ENCODE measurements at regions of chr14 and their contacts with region 1.

Region 1: GRCh38 chr14:34331728-34332623 is 130.1 kb downstream of the SPTSSA start:
- DNase-seq: peak; percentile 66 to 70
- H3K4me3 ChIP-seq: no peak overlapping the region
- H3K27ac ChIP-seq: peak overlapping the region; percentile 44
- H3K4me1 ChIP-seq: peaks cover 19% of the 10 kb centered on the region
- H3K27me3 ChIP-seq: no peaks in the 10 kb centered on the region
- CTCF ChIP-seq: peak; percentile 84

Region 2: GRCh38 chr14:34262127-34262910 is 69.7 kb before region 1 on chr14:
- CTCF ChIA-PET with region 1: no interaction called
- POLR2A ChIA-PET with region 1: interaction called, 33 read pairs
- intact Hi-C with region 1: no loop called
- DNase-seq: no peak
- H3K4me3 ChIP-seq: no peak overlapping the region
- H3K27ac ChIP-seq: no peak overlapping the region
- H3K4me1 ChIP-seq: 0 out of 2 replicates have a peak, but pooled peaks cover 8% of the 10 kb centered on the region
- H3K27me3 ChIP-seq: no peaks in the 10 kb centered on the region
- CTCF ChIP-seq: no peak

Region 3: DNA sequence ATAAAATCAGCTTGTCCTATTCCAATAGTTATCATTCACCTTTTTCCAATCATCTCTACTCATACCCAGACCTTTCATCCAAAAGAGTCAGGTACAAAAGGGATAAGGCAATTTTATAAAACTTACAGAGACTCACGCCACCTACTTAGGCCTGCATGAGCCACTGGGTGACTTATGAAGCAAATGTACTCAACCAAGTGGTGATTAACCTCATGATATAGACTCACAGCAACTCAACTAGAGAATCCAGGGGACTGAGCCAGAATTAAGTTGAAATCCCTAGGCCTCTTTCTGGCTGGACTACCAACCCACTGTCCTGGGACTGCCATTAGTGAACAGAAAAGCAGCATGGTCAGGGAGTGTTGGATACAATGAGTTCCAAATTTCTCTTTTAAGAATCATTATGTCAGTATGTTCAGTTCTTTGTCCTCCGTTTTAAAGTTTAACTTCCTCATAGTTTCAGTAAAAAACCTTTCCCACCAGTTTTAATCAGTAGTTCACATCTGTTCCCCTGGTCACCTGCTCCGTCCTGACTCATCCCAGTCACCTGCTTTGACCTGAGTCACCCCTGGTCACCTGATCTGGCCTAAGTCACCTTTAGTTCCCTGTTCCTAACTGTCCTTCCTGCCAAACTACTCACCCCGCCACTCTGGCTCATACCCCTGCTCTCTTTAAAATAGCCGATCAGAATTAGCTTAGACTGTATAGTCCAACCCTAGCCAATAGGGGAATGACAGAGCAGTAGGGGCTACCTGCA is 93.3 kb after region 1 on chr14:
- CTCF ChIA-PET with region 1: interaction called, 3 read pairs
- POLR2A ChIA-PET with region 1: no interaction called
- intact Hi-C with region 1: loop called (anchors 1 kb)
- DNase-seq: peak; percentile 67 to 87
- H3K4me3 ChIP-seq: no peak overlapping the region
- H3K27ac ChIP-seq: peak overlapping the region; percentile 93
- H3K4me1 ChIP-seq: peaks cover 22% of the 10 kb centered on the region
- H3K27me3 ChIP-seq: no peaks in the 10 kb centered on the region
- CTCF ChIP-seq: no peak

Region 4: DNA sequence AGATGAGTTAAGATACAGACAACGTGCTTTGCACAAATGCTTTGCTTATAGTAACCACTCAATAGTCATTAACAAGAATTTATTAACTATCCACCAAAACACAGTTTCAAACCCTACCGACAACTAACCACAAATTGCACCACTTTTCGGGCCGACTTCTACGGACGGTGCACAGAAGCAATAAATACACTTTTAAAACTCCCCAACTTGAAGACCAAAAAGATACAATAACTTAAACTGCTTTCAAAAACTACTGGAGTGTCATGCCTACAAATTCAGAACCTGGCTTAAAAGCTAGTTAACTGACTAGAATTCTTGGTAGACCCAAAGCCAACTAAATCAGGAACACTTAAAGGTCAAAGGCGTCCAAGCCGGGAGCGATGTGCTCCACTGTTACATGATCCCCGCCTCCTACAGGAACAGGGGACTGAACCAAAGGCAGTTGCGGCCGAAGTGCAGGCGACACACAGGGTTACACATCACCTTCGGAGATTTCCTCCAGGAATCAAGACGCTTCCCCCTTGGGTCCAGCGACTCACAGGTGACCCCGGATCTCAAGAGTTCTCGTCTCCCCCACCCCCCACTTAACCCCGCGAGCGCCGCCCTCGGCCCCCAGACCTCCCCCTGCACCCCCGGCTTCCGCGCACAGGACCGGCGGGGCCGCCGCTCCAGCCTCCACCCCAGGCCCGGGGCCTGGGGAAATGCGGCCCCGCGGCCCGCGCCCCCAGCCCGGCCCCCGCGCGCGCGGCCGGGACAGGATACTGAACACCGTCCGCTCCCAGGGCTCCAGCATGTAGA is 129.6 kb after region 1 on chr14:
- CTCF ChIA-PET with region 1: interaction called, 4 read pairs
- POLR2A ChIA-PET with region 1: interaction called, 5 read pairs
- intact Hi-C with region 1: loop called (anchors 1 kb)
- DNase-seq: peak; percentile 32 to 49
- H3K4me3 ChIP-seq: peak overlapping the region; percentile 67
- H3K27ac ChIP-seq: no peak overlapping the region
- H3K4me1 ChIP-seq: peaks cover 10% of the 10 kb centered on the region
- H3K27me3 ChIP-seq: no peaks in the 10 kb centered on the region
- CTCF ChIP-seq: no peak

Region 5: DNA sequence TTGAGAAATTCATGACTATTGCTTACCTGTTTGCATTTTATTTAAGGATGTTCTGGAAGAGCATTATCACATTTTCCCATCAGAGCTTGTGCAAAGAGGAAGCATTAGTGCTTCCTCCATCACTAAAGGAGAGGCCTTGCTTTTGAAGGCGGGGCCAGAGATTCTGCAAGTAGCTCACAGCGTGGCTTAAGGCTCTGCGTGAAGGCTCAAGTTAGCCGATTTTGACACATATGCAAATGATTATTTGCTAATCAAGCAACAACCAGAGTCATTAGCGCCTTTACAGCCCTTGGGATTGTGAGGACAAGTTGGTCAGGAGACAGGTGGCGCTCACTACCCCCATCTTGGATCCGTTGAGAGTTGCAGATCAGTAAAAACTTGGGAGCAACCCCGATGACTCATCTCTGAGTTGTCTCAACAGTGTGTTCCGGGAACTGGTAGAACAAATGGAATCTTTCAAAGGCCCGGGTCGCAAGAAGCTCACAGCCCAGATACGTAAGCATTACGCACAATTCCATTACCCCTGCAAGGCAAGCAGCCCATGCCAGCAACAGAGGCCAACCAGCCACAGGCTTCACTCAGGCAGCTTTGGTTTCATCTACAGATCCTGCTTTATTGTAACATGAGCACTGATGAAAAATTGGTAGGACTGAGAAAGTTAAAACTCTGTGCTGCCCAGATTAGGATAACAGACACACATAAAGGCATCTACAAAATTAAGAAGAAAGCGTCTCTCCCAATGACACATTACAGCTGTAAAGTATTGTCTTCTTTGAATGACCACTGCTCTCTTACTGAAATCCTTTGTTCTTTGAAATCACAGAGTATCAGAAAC is 164.9 kb after region 1 on chr14:
- CTCF ChIA-PET with region 1: interaction called, 7 read pairs
- POLR2A ChIA-PET with region 1: no interaction called
- intact Hi-C with region 1: loop called (anchors 1 kb)
- DNase-seq: peak; percentile 70 to 89
- H3K4me3 ChIP-seq: peak overlapping the region; percentile 27; the same call in 1 of the 2 replicates
- H3K27ac ChIP-seq: peak overlapping the region; percentile 85
- H3K4me1 ChIP-seq: peaks cover 33% of the 10 kb centered on the region
- H3K27me3 ChIP-seq: no peaks in the 10 kb centered on the region
- CTCF ChIP-seq: no peak; the same call in 1 of the 2 replicates

Region 6: DNA sequence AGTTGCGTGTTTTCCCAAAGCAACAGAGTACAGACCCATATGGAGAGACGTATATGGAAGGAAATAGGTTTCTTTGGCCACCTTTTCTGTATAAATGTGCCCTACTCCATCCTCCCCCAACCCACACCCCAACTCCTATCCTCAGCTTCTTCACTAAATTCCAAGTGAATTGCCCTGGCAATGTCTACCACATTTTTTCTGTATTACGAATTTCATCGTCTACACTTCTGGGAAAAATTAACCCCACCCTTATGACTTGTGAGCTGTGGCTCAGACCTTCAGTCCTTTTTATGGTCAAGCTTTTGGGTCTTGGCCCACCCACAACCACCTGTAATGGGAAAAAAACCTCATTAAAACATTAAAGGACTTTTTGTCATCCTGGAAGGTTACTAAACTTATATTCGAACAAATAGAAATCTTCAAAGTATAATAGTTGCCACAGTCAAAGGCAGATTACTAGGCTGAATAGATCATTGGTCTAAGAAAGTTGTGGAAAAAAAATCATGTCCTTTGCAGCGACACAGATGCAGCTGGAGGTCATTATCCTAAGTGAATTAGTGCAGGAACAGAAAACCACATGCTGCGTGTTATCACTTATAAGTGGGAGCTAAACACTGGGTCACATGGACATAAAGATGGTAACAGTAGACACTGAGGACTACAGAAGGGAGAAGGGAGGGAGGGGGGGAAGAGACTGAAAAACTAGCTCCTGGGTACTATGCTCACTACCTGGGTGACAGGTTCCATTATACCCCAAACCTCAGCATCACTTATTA is 1088.2 kb after region 1 on chr14:
- CTCF ChIA-PET with region 1: no interaction called
- POLR2A ChIA-PET with region 1: no interaction called
- intact Hi-C with region 1: loop called (anchors 5 kb)
- DNase-seq: no peak
- H3K4me3 ChIP-seq: no peak overlapping the region
- H3K27ac ChIP-seq: no peak overlapping the region
- H3K4me1 ChIP-seq: no peaks in the 10 kb centered on the region
- H3K27me3 ChIP-seq: no peaks in the 10 kb centered on the region
- CTCF ChIP-seq: no peak

Measured in PC-9 (cell line).